ENCODE measurements at regions of chr12 and their contacts with region 1.

Region 1: GRCh38 chr12:106030210-106031175 is 108.3 kb downstream of the NUAK1 start:
- DNase-seq: peak; percentile 32
- ATAC-seq: peak; percentile 92
- H3K4me3 ChIP-seq: peak overlapping the region in 1 of 2 experiments; percentile 15; a peak in 2 of 4 replicates
- H3K27ac ChIP-seq: peak overlapping the region; percentile 95
- H3K4me1 ChIP-seq: peaks cover 50% of the 10 kb centered on the region
- H3K27me3 ChIP-seq: no peaks in the 10 kb centered on the region
- CTCF ChIP-seq: no peak

Region 2: GRCh38 chr12:105420659-105421240 is 609.7 kb before region 1 on chr12:
- CTCF ChIA-PET with region 1: no interaction called
- POLR2A ChIA-PET with region 1: no interaction called
- in situ Hi-C with region 1: no loop called
- intact Hi-C with region 1: loop called (anchors 10 kb)
- DNase-seq: peak; percentile 55
- ATAC-seq: peak; percentile 94
- H3K4me3 ChIP-seq: no peak overlapping the region
- H3K27ac ChIP-seq: peak overlapping the region; percentile 75
- H3K4me1 ChIP-seq: peaks cover 5% of the 10 kb centered on the region
- H3K27me3 ChIP-seq: no peaks in the 10 kb centered on the region
- CTCF ChIP-seq: peak; percentile 88

Region 3: GRCh38 chr12:105944628-105945027 is 85.9 kb before region 1 on chr12:
- CTCF ChIA-PET with region 1: no interaction called
- POLR2A ChIA-PET with region 1: no interaction called
- in situ Hi-C with region 1: no loop called
- intact Hi-C with region 1: loop called (anchors 5 kb)
- DNase-seq: no peak
- ATAC-seq: no peak
- H3K4me3 ChIP-seq: no peak overlapping the region
- H3K27ac ChIP-seq: no peak overlapping the region
- H3K4me1 ChIP-seq: no peaks in the 10 kb centered on the region
- H3K27me3 ChIP-seq: no peaks in the 10 kb centered on the region
- CTCF ChIP-seq: no peak

Region 4: GRCh38 chr12:106096376-106096775 is 65.9 kb after region 1 on chr12:
- CTCF ChIA-PET with region 1: no interaction called
- POLR2A ChIA-PET with region 1: no interaction called
- in situ Hi-C with region 1: no loop called
- intact Hi-C with region 1: no loop called
- DNase-seq: peak; percentile 70
- ATAC-seq: peak; percentile 82
- H3K4me3 ChIP-seq: no peak overlapping the region
- H3K27ac ChIP-seq: peak overlapping the region; percentile 80
- H3K4me1 ChIP-seq: peaks cover 56% of the 10 kb centered on the region
- H3K27me3 ChIP-seq: no peaks in the 10 kb centered on the region
- CTCF ChIP-seq: no peak